Cardiac septum (tissue), 1 donor: ENCODE measurements at regions of chr9 and their contacts with region 1.

Region 1: DNA sequence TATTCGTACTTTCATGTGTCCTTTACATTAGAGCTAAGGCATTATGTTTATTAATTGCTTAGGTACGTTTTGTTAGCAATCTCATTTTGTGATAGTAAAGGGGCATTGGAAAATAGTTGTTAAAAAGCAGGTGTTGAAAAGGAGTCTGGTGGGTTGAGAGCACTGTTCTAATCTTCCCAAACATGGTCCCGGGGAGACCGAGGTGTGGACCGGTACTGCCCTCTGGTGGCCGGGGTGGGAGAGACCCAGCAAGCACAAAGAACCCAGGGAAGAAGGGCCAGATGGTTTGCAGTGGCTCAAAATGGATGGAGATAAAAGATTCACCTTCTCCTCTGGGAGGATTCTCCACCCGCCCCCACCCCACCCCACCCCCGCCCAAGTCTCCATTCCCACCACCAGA is 26.1 kb downstream of the IDNK start:
- DNase-seq: peak; percentile 87

Region 2: DNA sequence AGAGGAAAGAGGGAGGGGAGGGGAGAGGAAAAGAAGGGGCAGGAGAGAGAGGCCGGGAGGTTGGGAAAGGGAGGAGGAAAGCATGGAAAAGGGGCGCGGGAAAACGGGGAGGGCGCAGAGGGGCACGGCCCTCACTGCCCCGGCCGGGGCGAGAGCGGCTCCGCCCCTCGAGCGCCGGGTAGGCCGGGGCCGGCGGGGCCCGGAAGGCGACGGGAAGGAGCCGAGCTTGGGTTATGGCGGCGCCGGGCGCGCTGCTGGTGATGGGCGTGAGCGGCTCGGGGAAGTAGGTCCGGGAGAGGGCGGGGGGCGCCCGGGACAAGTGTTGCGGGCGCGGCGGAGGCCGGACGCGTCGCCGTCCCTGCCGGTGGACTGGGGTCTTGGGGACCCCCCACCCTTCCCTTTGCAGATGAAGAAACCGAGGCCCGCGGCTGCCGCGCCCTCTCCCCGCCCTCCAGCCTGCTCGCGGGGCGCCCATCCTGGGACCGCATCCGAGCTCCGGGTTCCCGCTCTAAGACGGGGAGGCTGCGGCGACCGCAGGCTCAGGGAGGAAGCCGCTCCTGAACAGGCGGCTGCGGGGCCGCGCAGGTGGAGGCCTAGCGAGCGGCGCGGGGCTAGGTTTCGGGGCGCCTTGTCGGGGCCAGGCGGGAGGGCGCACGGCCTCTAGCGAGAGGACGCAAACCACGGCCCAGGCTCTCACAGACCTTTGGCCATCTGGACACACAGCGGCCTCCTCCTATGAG is 26.0 kb before region 1 on chr9 and contains the start of gene IDNK:
- intact Hi-C with region 1: loop called (anchors 2 kb)
- DNase-seq: peak; percentile 90
- total RNA-seq, gene IDNK: 5.4 TPM